ENCODE measurements at regions of chr7 and their contacts with region 1.

Region 1: DNA sequence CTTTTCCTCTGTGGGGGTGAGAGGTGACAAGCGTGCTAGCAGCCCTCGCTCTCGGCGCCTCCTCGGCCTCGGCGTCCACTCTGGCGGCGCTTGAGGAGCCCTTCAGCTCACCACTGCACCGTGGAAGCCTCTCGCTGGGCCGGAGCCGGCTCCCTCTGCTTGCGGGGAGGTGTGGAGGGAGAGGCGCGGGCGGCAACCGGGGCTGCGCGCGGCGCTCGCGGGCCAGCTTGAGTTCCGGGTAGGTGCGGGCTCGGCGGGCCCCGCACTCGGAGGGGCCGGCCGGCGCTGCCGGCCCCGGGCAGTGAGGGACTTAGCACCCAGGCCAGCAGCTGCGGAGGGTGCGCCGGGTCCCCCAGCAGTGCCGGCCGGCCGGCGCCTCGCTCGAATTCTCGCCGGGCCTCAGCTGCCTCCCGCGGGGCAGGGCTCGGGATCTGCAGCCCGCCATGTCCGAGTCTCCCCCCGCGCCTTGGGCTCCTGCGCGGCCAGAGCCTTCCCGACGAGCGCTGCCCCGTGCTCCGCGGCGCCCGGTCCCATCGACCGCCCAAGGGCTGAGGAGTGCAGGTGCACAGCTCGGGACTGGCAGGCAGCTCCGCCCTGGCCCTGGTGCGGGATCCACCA is 352.8 kb upstream of the PODXL start:
- DNase-seq: no peak
- H3K4me3 ChIP-seq: peak overlapping the region; percentile 30
- CTCF ChIP-seq: no peak

Region 2: DNA sequence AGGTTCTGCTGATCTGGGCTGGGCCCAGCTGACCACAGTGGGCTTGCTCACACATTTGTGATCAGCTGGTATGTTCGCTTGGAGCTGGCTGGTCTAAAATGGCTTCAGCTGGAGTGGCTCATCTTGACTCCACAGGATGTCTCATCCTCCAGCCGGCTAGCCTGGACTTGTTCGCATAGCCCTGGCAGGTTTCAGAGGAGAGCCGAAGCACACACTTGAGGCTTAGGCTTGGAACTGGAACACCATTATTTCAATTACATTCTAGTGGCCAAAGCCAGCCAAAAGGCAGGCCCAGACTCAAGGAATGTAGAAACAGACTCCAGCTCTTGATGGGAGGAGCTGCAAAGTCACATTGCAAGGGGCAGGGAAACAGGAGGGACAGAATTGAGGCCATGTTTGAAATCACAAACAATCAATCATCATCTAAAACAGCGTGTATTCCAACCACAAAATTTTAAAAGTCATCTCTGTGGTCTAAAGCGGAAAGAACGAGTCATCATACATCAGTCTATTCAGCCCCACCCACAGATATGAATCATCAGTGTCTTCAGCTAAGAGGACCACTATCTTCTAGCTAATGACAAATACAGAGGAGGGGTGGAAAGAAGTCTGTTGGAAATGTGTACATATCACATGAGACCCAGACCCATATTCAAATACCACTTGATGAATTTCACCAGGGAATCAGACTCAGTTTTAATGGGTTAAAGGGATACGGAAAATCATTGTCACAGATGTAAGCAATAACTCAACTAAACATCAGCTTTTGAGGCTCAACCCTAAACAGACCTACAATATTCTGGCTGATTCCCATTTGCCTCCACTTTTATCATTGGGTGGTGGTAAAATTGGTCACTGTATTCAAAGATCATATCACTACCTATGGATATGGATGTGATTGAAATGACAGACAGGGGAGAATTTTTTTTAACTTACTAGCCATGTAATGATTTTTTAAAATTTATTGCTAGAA is 720.6 kb before region 1 on chr7:
- CTCF ChIA-PET with region 1: no interaction called
- POLR2A ChIA-PET with region 1: no interaction called
- DNase-seq: peak; percentile 94
- H3K4me3 ChIP-seq: no peak overlapping the region
- CTCF ChIP-seq: no peak

Region 3: DNA sequence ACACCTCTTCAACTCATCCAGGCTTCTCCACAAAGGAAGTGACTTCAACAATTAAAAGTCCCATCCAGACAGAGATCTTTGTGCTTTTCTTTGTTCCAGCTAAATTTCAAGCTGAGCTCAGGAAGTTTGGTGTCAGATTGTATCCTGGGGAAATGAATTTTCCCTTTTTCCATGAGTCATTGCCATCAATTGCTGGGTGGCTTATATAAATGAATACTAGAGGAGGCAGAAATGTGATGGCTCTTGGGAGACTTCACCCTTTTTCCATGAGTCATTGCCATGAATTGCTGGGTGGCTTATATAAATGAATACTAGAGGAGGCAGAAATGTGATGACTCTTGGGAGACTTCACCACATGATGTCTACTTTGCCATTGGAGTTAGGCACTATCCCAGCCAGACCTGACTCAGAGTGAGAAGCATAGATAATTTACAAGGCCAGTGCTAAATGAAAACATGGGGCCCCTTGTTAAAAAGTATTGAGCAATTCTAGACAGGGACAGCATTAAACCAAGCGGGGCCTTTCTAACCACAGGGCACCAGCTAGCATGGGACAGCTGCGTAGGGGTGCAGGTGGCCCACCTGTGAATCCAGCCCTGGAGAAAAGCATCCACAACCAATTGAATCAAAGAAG is 13.6 kb before region 1 on chr7:
- CTCF ChIA-PET with region 1: interaction called, 10 read pairs
- POLR2A ChIA-PET with region 1: interaction called, 10 read pairs
- DNase-seq: peak; percentile 96
- H3K4me3 ChIP-seq: no peak overlapping the region
- CTCF ChIP-seq: no peak